HAP-1 (cell line): ENCODE measurements at regions of chr3 and their contacts with region 1.

Region 1: GRCh38 chr3:129934234-129935123 is 40.0 kb upstream of the TRH start:
- DNase-seq: peak; percentile 40 to 61
- H3K4me3 ChIP-seq: no peak overlapping the region
- H3K4me1 ChIP-seq: peaks cover 8% of the 10 kb centered on the region
- H3K27me3 ChIP-seq: no peaks in the 10 kb centered on the region

Region 2: GRCh38 chr3:129633751-129634392 is 300.6 kb before region 1 on chr3:
- in situ Hi-C with region 1: loop called (anchors 5 kb)
- DNase-seq: peak in 1 of 2 experiments; percentile 49
- H3K4me3 ChIP-seq: no peak overlapping the region
- H3K4me1 ChIP-seq: 0 out of 2 replicates have a peak, but pooled peaks cover 3% of the 10 kb centered on the region
- H3K27me3 ChIP-seq: no peaks in the 10 kb centered on the region

Region 3: GRCh38 chr3:129688271-129688895 is 246.1 kb before region 1 on chr3:
- in situ Hi-C with region 1: no loop called
- DNase-seq: peak; percentile 63 to 78
- H3K4me3 ChIP-seq: no peak overlapping the region
- H3K4me1 ChIP-seq: peaks cover 48% of the 10 kb centered on the region
- H3K27me3 ChIP-seq: no peaks in the 10 kb centered on the region